Panc1 (cell line): ENCODE measurements at regions of chr6 and their contacts with region 1.

Region 1: GRCh38 chr6:11009353-11009752 is 34.8 kb downstream of the ELOVL2 start:
- DNase-seq: peak; percentile 71
- ATAC-seq: peak; percentile 67
- H3K4me3 ChIP-seq: peak overlapping the region in 1 of 2 experiments; percentile 31; a peak in 2 of 4 replicates
- H3K27ac ChIP-seq: peak overlapping the region; percentile 34
- H3K4me1 ChIP-seq: peaks cover 56% of the 10 kb centered on the region
- H3K27me3 ChIP-seq: no peaks in the 10 kb centered on the region
- CTCF ChIP-seq: no peak

Region 2: DNA sequence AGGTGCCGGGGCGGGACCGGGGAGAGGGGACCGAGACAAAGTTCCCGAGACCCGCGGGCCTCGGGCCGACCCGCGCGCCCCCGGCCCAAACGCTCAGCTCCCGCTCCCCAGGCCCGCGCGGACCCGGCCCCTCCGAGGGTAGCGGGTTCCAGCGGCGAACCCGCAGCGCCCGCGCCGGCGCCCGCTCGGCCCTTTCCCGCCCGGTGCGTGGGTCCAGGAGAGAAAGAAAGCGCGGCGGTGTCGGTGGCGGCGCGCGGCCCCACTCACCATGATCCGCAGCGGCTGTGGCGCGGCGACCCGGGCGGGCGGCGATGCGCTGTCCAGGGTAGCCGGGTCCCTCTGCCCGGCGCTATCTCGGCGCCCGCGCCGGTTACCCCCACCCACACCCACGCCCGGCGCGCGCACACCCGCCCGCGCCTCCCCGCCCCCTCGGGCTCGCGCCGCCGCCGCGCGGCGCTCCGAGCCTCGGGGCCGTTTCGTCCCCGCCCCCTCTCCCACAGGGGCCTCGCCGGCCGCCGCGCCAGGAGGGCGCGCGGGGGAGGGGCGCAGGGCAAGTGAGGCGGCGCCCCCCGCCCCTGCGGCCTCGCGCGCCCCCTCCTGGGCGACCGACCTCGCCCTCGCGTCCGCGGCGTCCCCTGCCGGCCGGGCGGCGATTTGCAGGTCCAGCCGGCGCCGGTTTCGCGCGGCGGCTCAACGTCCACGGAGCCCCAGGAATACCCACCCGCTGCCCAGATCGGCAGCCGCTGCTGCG is 34.8 kb after region 1 on chr6 and contains the start of gene ELOVL2:
- CTCF ChIA-PET with region 1: no interaction called
- POLR2A ChIA-PET with region 1: no interaction called
- in situ Hi-C with region 1: no loop called
- intact Hi-C with region 1: loop called (anchors 5 kb)
- DNase-seq: no peak
- ATAC-seq: peak; percentile 83
- H3K4me3 ChIP-seq: peak within 1 kb of the TSS; percentile 56 to 75
- H3K27ac ChIP-seq: peak within 1 kb of the TSS; percentile 81
- H3K4me1 ChIP-seq: peaks cover 29% of the 10 kb centered on the region
- H3K27me3 ChIP-seq: no peaks in the 10 kb centered on the region
- CTCF ChIP-seq: peak; percentile 100
- total RNA-seq, gene ELOVL2: 27.8 TPM

Region 3: DNA sequence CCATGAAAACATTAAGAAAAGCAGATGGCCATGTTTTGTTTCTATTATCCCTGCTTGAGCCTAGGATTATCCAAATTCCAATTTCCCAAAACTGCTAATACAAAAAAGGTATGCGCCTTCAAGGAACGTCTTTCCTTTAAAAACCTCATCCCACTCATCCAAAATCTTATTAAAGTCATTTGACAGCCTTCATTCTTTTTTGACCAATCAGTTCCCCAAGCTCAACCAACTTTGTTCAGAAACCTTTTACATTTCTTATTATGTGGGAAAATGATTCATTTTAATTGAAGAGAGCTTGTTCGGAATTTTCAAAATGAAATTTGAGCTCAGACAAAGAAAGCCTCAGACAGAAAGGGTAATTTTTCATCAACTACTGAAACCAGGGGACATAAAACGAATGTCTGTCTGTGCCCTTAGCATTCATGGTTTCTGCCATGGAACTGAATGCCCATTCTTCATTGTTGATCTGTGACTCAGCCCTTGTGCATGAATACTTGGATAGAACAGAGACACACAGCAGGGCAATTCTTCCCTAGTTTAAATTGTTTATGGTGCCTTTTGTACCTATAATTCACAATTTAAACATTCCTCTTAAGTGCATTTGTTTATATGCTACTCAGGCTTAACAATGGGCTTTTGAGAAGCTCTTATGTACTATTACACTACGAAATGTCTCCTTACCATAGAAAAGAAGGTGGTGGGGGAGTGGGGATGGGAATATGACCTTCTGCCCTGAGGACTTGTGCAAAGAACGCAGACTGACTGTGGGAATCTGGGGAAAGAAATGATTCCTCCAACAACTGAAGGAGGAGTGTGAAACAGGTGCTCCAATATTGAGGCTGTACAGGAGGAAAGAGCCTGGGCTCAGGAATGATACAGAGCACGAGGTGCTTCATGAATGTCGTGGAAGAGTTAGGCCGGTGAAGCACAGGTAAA is 151.9 kb after region 1 on chr6:
- CTCF ChIA-PET with region 1: no interaction called
- POLR2A ChIA-PET with region 1: no interaction called
- in situ Hi-C with region 1: no loop called
- intact Hi-C with region 1: no loop called
- DNase-seq: no peak
- ATAC-seq: no peak
- H3K4me3 ChIP-seq: no peak overlapping the region
- H3K27ac ChIP-seq: no peak overlapping the region
- H3K4me1 ChIP-seq: no peaks in the 10 kb centered on the region
- H3K27me3 ChIP-seq: no peaks in the 10 kb centered on the region
- CTCF ChIP-seq: no peak

Region 4: DNA sequence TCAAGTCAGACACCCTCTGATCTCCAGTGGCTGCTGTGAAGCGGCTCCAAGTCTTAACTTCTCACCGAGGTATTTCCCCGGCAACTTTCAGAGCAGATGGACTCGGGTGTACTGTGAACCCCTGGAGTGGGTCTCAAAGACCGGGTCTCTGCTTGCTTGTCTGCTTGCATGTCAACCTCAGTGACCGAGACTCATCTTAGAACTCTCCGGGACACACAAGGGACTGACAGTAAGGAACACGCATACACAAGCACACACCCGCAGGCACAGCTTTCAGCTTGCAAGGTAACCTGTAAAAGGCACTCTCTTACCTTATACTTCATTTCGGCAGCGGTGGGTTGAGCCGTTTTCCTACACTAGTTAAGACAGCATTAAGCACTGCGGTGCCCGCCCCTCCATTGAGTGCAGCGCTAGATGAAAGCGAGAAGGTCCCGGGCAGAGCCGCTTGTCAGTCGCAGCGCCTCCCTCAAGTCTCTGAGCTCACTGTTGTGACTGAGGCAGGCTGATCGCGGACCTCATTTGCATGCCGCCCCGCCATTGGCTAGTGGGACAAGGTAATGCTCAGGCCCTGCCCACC is 222.9 kb after region 1 on chr6 and contains the start of gene NEDD9:
- CTCF ChIA-PET with region 1: no interaction called
- POLR2A ChIA-PET with region 1: no interaction called
- in situ Hi-C with region 1: no loop called
- intact Hi-C with region 1: no loop called
- DNase-seq: peak; percentile 28
- ATAC-seq: peak; percentile 96
- H3K4me3 ChIP-seq: peak within 1 kb of the TSS; percentile 54 to 63
- H3K27ac ChIP-seq: no peak within 1 kb of the TSS; the same call in 1 of the 2 replicates
- H3K4me1 ChIP-seq: no peaks in the 10 kb centered on the region
- H3K27me3 ChIP-seq: peaks cover 12% of the 10 kb centered on the region; the same call in 1 of the 2 replicates
- CTCF ChIP-seq: no peak
- total RNA-seq, gene NEDD9: 0.28 TPM